Calu3 (cell line): ENCODE measurements at regions of chr6 and their contacts with region 1.

Region 1: GRCh38 chr6:53112404-53112803 is 36.2 kb downstream of the GCM1 start:
- DNase-seq: peak; percentile 73
- H3K4me3 Mint-ChIP-seq: peak overlapping the region; percentile 34
- H3K27ac Mint-ChIP-seq: peak overlapping the region; percentile 41
- H3K4me1 Mint-ChIP-seq: peaks cover 77% of the 10 kb centered on the region
- H3K27me3 Mint-ChIP-seq: no peaks in the 10 kb centered on the region
- CTCF ChIP-seq: no peak

Region 2: DNA sequence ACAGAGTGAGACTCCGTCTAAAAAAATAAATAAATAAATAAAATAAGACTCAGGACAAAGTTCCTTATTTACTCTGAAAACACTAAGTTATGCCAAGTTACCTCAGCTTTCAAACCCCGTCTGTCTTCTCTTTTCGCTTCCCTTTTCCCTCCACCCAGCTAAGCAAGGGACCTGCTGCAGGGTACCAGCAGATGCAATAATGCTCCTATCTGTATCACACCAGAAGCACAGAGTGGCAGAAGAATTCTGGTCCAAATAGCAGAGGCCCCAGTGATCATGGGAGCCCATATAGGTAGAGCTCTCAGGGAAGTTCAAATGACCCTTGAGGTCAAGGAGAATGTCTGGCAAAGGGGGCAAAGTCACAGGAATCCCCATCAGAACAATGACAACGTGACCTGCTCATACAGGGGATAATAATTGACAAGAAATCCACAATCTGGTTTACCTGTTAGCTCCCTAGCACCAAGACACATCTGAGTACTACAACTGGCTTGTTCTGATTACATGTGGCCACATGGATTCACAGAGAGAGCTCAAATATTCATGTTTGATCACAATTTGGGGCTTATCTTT is 27.5 kb after region 1 on chr6:
- CTCF ChIA-PET with region 1: no interaction called
- intact Hi-C with region 1: no loop called
- DNase-seq: no peak
- H3K4me3 Mint-ChIP-seq: no peak overlapping the region
- H3K27ac Mint-ChIP-seq: no peak overlapping the region
- H3K4me1 Mint-ChIP-seq: peaks cover 15% of the 10 kb centered on the region
- H3K27me3 Mint-ChIP-seq: no peaks in the 10 kb centered on the region
- CTCF ChIP-seq: no peak

Region 3: GRCh38 chr6:53159558-53159957 is 47.2 kb after region 1 on chr6:
- CTCF ChIA-PET with region 1: no interaction called
- intact Hi-C with region 1: loop called (anchors 2 kb)
- DNase-seq: no peak
- H3K4me3 Mint-ChIP-seq: no peak overlapping the region
- H3K27ac Mint-ChIP-seq: no peak overlapping the region
- H3K4me1 Mint-ChIP-seq: no peaks in the 10 kb centered on the region
- H3K27me3 Mint-ChIP-seq: no peaks in the 10 kb centered on the region
- CTCF ChIP-seq: no peak

Region 4: DNA sequence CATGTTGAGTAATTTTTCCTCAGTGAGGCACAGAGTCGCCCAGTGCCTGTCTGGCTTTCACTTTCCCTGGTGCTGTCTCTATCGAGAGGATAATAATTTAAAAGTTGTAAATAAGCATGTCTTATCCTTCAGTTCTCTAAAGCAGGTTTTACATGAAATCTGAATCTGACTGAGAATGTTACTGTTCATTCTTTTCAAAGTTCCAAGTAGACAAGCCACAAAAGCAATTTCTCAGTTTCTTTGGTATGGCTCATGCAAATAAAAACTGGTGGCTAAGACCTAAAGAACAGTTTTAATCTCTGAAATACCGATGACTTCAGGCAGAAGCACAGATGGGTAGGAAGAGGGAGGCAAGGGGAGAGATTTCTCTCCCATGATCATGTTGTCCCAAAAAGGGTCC is 123.8 kb after region 1 on chr6:
- CTCF ChIA-PET with region 1: no interaction called
- intact Hi-C with region 1: no loop called
- DNase-seq: no peak
- H3K4me3 Mint-ChIP-seq: no peak overlapping the region
- H3K27ac Mint-ChIP-seq: no peak overlapping the region
- H3K4me1 Mint-ChIP-seq: no peaks in the 10 kb centered on the region
- H3K27me3 Mint-ChIP-seq: no peaks in the 10 kb centered on the region
- CTCF ChIP-seq: no peak